Prostate gland (tissue), 2 donors: ENCODE measurements at regions of chr6 and their contacts with region 1.

Region 1: DNA sequence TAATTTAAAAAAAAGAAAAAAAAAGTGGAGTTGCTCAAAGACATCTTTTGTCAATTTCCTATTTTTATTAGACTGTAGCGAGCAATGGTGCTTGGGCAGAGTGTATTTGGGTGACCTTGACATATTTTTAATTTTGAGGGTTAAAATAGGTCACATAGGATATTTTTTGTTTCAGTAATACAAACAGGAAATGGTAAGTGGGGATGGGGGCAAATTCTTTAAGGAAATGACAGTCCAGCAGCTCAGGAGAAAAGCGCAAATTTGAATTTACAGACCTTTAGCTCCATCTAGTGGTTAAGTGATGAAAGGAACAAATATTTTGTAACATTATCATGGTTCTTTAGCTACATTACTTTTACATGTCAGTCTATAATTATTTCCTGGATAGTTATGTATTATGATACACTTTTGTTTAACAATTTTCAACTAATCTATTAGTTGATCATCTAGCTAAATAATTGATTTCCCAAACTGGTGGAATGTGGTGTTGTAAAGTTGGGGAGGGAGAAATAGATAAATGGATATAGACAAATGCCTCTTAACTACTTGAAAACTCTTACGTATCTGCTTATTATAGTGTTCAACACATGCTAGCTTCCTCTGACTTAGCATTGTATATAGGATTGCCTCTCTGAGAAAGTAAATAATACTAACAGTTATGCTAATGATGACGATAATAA is 10.0 kb downstream of the CITED2 start:
- DNase-seq: no peak
- H3K4me3 ChIP-seq: no peak overlapping the region
- H3K27ac ChIP-seq: no peak overlapping the region
- H3K4me1 ChIP-seq: no peaks in the 10 kb centered on the region
- H3K27me3 ChIP-seq: no peaks in the 10 kb centered on the region
- CTCF ChIP-seq: peak; percentile 59 to 87 (median 85)
- POLR2A ChIP-seq: no peak

Region 2: DNA sequence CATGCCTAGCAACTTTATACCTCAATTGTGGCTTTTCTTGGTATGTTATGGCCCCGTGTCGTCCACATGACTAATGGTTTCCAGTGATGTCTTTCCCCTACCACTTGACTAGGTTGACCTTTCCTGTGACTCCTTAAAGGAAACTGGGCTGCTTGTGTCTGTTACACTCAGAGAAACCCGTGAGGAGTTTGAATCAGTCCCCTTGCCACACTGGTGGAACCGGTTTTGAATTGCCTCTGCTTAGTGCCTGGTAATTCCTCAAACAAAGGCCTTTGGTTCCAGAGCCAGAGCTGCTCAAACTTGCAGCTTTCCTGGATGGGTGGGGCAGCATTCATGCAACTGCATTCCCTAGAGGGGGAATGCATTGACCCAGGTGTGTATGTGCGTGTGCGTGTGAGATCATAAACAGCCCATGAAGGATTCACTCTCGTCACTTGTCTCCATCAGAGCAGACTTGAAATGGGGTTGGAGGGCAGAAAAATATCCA is 546.6 kb before region 1 on chr6:
- intact Hi-C with region 1: loop called (anchors 5 kb)
- DNase-seq: peak; percentile 97
- H3K4me3 ChIP-seq: no peak overlapping the region
- H3K27ac ChIP-seq: peak overlapping the region; percentile 79 to 81
- H3K4me1 ChIP-seq: peaks cover 8% of the 10 kb centered on the region
- H3K27me3 ChIP-seq: no peaks in the 10 kb centered on the region
- CTCF ChIP-seq: no peak
- POLR2A ChIP-seq: no peak

Region 3: DNA sequence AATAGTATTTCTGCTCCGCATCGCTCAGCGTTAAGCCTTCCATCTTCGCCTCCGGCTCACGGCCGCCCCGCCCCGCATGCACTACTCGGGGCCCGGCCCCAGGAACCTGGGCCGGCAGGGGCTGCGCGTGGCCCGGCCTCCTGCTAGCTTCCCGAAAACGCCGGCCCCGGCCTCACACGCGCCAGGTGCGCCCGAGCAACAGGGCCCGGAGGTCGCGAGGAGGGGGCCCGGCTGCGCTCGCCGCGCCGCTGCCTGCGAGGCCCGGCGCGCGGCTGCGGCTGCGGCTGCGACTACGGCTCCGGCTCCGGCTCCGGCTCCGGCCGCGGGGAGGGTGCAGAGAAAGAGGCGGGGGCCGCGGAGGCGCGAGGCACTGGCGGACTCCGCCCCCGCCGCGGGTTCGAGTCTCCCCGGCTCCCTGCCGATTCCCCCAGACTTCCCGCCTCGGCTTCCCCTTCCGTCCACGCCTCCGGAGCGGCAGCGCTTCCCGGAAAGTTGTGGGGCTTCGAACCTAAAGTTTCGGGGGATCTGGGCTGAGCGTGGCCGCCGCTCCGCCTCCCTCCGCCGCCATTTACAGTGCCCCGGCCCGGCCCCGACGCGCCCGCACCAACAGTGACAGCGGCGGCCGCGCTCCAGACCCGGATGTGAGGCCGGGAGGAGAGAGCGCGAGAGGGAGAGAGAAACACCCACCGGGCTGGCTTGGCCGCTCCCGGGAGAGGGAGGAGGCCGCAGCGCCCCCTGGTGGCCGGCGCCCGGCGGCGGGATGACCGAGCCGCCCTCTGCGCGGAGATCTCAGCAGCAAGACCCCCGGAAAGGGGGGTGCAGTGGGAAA is 376.6 kb before region 1 on chr6 and contains the start of gene REPS1:
- intact Hi-C with region 1: loop called (anchors 10 kb)
- DNase-seq: peak; percentile 86
- H3K4me3 ChIP-seq: peak within 1 kb of the TSS; percentile 84 to 92
- H3K27ac ChIP-seq: peak within 1 kb of the TSS; percentile 89
- H3K4me1 ChIP-seq: no peaks in the 10 kb centered on the region
- H3K27me3 ChIP-seq: no peaks in the 10 kb centered on the region
- CTCF ChIP-seq: peak; percentile 96 to 99 (median 97)
- POLR2A ChIP-seq: peak; percentile 79
- total RNA-seq, gene REPS1: 38.6 to 97.1 TPM

Region 4: GRCh38 chr6:139134817-139135581 is 229.4 kb before region 1 on chr6 and contains the start of gene HECA:
- intact Hi-C with region 1: loop called (anchors 10 kb)
- DNase-seq: peak; percentile 98
- H3K4me3 ChIP-seq: peak within 1 kb of the TSS; percentile 65 to 92
- H3K27ac ChIP-seq: peak within 1 kb of the TSS; percentile 87 to 94
- H3K4me1 ChIP-seq: no peaks in the 10 kb centered on the region
- H3K27me3 ChIP-seq: no peaks in the 10 kb centered on the region
- CTCF ChIP-seq: peak in 1 of 4 experiments; percentile 20
- POLR2A ChIP-seq: peak; percentile 94
- total RNA-seq, gene HECA: 26.0 to 45.9 TPM

Region 5: GRCh38 chr6:139219746-139220145 is 144.7 kb before region 1 on chr6:
- intact Hi-C with region 1: loop called (anchors 5 kb)
- DNase-seq: no peak
- H3K4me3 ChIP-seq: no peak overlapping the region
- H3K27ac ChIP-seq: peak overlapping the region in 1 of 2 donors; percentile 55
- H3K4me1 ChIP-seq: no peaks in the 10 kb centered on the region
- H3K27me3 ChIP-seq: no peaks in the 10 kb centered on the region
- CTCF ChIP-seq: no peak
- POLR2A ChIP-seq: no peak